ENCODE measurements at regions of chr15 and their contacts with region 1.

Region 1: GRCh38 chr15:56245871-56246814 is 2.5 kb upstream of the RFX7 start:
- DNase-seq: peak; percentile 81
- CTCF ChIP-seq: peak; percentile 100

Region 2: DNA sequence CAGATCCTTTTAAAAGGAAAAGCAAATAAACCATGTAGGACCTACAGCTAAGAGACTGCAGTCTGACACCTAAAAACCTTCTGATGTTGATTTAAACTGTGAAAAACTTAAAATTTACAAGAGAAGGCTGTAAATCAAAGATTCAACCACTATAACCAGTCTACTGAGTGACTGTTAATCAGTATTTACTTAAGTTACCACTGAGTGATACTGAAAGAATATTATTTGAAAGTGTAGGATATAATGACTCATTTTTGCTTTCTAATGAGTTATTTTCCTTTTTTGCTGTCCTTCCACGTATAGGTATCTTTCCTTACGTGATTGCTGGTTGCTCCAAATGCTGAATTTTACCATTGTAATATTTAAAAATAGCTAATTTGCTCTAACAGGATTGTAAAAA is 47.1 kb before region 1 on chr15:
- CTCF ChIA-PET with region 1: interaction called, 17 read pairs
- POLR2A ChIA-PET with region 1: interaction called, 3 read pairs
- DNase-seq: no peak
- CTCF ChIP-seq: no peak

Region 3: DNA sequence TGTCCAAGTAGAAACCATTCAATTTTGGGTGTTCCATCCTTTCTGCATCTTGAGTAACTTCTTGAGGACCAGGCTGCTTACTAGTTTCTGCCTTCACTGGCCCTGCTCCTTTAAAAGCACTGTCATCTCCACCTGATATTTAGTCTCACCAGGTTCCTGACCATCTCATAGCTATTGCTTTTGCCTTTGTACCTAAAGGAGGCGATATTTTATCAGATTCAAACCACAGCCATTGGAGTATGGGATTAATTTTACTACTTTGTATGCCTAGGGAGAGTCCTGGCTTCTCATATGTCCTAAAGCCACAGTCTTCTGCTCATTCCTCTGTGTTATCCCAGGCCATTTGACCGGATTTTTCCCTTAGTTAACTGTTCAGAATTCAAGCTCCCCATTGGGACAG is 49.3 kb after region 1 on chr15:
- CTCF ChIA-PET with region 1: interaction called, 12 read pairs
- POLR2A ChIA-PET with region 1: no interaction called
- DNase-seq: no peak
- CTCF ChIP-seq: no peak

Region 4: DNA sequence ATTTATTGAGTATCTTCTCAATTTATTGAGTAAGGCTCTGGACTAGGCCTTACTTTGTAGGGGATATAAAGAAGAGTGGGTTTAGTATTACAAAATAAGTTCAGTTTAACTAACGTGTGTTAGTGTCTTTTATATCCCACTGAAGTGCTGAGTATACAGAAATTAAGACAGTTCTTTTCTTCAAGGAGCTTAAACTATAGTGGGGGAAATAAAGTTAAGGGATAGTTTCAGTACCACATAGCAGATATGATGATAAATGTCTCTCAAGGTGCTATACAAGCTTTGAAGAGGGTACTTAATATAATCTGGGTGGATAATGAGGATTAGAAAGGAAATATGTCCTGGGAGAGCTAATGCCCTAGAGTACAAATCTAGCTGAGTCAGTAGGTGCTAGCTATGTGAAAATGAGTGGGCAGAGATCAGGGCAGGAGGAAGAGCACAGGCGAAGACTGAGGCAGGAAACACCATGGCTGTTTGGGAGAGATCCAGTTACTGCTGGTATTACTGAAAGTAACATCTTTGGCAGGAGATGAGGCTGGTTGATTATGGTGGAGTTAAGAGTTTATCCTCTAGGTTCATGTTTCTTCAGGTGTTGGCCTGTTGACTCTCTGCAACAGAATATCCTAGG is 165.1 kb after region 1 on chr15:
- CTCF ChIA-PET with region 1: interaction called, 11 read pairs
- POLR2A ChIA-PET with region 1: no interaction called
- DNase-seq: no peak
- CTCF ChIP-seq: no peak

Region 5: DNA sequence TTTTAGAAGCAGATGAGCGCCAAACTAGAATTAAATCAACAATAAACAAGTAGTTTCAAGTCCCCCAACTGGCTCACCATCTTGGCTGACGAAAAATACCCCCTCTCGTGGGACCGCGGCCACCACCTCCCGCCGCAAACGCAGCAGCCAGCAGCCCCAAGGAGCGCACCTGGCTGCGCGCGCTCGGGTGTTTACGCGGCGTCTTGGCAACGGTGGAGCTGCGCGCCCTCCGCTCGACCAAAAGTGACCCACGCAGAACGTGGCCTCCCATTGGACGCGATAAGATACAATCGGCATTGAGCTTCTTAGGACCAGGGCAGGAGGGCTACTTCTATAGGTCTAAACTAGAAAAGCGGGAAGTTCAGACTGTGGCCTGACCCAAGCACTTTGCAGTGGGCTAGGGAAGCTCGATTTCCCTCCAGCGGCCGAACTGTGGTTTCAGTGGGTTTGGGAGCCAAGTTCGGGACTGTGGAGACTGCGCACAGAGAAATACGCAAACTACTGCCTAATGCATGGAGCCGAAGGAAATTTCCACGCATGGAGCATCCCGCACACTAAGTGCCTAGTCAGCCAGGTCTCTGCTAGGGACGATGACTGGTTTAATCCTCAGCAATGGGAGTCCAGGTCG is 218.9 kb after region 1 on chr15 and contains the start of gene MNS1:
- CTCF ChIA-PET with region 1: interaction called, 12 read pairs
- POLR2A ChIA-PET with region 1: no interaction called
- DNase-seq: peak; percentile 94
- CTCF ChIP-seq: no peak